Astrocyte of the cerebellum (primary cell): ENCODE measurements at regions of chr3 and their contacts with region 1.

Region 1: GRCh38 chr3:28171962-28172361 is 69.5 kb upstream of the CMC1 start:
- DNase-seq: no peak
- H3K4me3 ChIP-seq: no peak overlapping the region
- CTCF ChIP-seq: no peak

Region 2: DNA sequence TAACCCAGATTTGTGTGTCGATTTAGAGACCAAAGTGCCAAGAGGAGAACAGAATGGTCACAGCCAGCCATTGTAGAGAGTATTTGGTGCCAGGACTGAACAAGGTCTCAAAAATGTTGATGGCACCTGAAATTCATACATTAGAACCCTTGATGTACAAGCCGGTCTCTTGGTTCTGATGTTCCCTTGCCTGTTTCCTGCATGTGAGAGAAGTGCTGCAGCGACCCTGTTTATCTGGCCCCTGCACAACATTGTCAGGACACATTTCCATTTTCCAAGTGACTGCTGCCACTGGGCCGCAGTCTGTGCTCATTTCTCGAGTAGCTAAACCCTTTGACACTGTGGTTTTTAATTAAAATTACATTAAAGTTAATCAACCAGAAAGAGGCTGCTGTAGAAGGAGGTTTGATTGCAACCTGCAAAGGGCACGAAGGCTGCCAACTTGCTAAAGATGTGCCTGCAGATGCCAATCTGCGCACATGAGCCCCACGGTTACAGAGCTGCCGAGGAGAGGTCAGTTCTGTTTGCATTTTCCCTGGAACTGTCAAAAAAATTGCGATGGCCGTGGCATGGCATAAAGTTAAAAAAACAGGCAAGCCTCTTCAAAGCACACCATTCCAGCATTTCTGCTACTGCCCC is 66.9 kb before region 1 on chr3:
- in situ Hi-C with region 1: loop called (anchors 5 kb)
- DNase-seq: no peak
- H3K4me3 ChIP-seq: no peak overlapping the region
- CTCF ChIP-seq: no peak

Region 3: GRCh38 chr3:28122227-28122626 is 49.7 kb before region 1 on chr3:
- in situ Hi-C with region 1: no loop called
- DNase-seq: no peak
- H3K4me3 ChIP-seq: no peak overlapping the region
- CTCF ChIP-seq: no peak